Left cardiac atrium (tissue), 4 donors: ENCODE measurements at regions of chr5 and their contacts with region 1.

Region 1: DNA sequence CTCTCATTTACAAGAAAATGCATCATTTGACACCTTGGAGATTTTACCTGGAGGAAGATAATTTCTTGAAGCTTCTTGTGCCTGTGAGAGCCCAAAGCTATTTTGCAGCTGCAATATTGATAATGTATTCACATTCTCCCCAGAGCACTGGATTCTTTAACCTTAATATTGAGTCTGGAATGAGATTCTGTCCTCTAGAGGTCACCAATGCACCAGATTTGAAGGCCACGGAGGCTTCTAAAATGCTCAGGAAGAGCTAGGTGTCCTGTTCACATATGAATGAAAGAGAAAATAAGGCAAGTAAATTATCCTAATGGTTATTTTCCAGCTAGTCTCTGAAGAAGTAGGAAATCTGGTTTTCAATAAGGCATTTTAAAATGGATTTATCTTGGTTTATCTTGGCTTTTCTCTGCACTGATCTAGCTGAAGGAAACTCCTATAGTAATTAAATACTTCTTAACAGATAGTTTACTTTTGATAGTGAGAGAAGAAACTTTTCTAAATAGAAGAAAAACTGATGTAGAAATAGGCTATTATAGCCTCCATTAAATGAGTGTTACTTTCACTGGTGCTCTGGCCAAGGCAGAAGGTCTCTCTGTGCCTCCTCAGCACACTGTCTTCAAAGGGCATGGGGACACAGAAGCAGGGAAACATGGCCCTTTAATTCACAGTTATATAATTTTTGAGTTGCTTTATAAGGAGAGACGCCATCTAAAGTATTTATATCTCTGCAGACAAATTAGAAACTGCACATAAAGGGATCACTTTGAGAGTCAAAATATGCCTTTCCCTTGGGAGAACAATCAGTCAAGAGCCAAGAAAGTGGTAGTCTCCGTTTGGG is 297.0 kb upstream of the ACTBL2 start:
- DNase-seq: no peak
- ATAC-seq: peak; percentile 83 to 87

Region 2: DNA sequence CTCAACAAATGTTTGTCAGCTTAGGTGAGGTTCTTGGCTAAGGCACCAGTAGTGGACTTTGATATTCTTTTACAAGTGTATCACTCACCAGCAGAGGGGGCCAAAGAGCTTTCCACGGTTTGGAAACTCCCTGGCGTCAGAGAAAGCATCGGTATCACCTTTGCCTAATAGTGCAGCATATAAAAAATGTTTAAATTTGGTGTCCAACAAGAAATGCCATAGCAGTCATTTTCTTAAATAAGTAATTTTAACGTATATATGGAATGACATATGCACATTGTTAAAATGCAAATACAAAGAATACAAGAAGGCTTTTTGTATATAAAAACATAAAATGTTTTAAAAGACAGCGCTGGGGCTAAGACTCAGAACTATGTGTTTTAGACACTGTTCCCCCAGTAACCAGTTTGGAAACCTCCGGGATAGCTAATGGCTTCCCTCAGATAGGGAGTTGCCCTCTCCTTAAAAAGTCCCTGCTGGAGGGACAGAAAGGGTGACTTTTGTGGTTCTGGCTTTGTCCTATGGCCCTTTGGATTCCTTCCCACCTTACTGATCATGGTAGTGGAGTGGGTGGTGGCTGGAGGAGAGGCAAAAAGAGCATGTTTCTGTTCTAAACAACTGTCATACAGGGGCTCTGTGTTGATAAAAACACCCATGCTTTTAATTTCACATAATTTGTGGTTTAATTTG is 481.2 kb before region 1 on chr5:
- intact Hi-C with region 1: loop called in 1 of 2 experiments (anchors 5 kb)
- DNase-seq: peak; percentile 84
- ATAC-seq: peak; percentile 90 to 94

Region 3: DNA sequence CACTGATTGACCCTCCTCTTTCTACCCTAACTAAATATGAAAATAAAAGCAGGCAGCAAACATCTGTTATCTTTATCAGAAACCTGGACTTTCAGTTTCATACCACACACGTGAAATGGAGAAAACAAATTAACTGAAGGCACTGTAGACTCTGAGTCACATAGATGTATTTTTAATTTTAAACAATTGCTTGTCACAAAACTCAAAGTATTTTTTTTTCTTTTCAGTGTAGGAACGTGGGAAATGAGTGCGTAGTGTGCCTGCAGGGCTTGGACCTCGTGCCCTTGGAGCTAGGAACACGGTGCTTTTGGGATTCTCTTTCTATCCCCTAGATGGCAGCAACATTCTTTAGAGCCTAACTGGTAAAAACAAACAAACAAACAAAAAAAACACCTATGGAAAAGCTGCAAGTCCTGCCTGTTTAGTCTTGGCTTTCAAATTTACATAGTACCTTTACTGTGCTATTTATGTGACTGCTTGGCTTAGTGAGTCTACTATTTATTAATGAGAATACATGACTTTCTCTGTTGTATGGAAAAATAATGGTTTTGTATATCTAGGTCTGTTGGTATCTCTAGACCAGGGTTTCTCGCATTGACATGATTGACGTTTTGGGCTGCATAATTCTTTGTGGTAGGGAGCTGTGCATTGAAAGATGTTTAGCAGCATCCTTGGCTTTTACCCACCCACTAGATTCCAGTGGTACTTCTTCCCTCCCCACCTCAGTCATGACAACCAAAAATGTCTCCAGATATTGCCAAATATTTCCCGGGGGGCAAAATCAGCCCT is 280.1 kb before region 1 on chr5:
- intact Hi-C with region 1: loop called in 1 of 2 experiments (anchors 5 kb)
- DNase-seq: no peak
- ATAC-seq: peak; percentile 32

Region 4: DNA sequence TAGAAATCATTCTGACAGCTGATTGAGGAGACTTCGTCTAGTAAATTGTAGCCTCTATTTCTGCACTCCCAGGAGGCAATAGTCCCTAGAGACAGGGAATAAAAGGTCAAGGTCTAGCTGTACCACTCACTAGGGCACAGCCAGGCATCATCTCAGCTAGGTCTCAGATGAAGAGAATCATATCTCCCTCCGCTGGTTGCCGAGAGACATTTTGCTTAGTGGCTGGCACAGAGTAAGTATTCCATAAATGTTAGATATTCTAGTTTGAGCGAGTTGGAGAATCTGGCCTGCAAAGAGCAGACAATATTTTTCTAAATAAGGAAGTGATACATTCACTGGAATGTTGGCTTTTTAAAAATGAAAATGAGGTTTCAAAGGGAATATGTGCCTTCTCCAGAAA is 116.6 kb before region 1 on chr5:
- intact Hi-C with region 1: loop called in 1 of 2 experiments (anchors 10 kb)
- DNase-seq: no peak
- ATAC-seq: peak; percentile 38 to 80